Ovary (tissue), 10 donors: ENCODE measurements at regions of chr14 and their contacts with region 1.

Region 1: DNA sequence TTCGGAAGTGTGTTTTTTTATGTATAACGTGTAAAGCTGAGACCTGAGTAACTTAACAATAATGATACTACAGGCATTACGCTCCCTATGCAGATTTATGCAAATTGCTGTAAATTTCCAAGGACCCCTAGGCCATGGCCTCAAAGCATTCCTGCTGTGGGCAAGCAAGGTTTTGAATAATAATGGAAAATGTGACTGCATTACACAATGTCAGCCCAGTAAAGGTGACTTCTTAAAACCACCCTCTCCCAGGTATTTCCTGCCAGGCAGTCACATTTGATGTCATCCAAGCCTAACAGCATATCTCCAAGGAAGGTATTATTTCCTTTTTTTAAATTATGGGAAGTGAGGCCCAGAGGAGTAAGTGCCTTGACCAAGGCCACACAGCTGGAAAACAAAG is 621.0 kb downstream of the BCL11B start:
- DNase-seq: no peak
- H3K4me3 ChIP-seq: no peak overlapping the region
- H3K27ac ChIP-seq: no peak overlapping the region
- H3K4me1 ChIP-seq: no peaks in the 10 kb centered on the region
- H3K27me3 ChIP-seq: no peaks in the 10 kb centered on the region
- CTCF ChIP-seq: no peak
- EP300 ChIP-seq: no peak
- POLR2A ChIP-seq: no peak

Region 2: GRCh38 chr14:100155042-100155846 is 1504.2 kb after region 1 on chr14:
- intact Hi-C with region 1: loop called in 1 of 4 experiments (anchors 10 kb)
- DNase-seq: peak in 1 of 5 donors; percentile 33
- H3K4me3 ChIP-seq: no peak overlapping the region
- H3K27ac ChIP-seq: no peak overlapping the region
- H3K4me1 ChIP-seq: peaks cover 4% of the 10 kb centered on the region
- H3K27me3 ChIP-seq: peaks cover 10% of the 10 kb centered on the region
- CTCF ChIP-seq: peak in 1 of 3 donors; percentile 17
- EP300 ChIP-seq: no peak
- POLR2A ChIP-seq: no peak